ENCODE measurements at regions of chr2 and their contacts with region 1.

Region 1: DNA sequence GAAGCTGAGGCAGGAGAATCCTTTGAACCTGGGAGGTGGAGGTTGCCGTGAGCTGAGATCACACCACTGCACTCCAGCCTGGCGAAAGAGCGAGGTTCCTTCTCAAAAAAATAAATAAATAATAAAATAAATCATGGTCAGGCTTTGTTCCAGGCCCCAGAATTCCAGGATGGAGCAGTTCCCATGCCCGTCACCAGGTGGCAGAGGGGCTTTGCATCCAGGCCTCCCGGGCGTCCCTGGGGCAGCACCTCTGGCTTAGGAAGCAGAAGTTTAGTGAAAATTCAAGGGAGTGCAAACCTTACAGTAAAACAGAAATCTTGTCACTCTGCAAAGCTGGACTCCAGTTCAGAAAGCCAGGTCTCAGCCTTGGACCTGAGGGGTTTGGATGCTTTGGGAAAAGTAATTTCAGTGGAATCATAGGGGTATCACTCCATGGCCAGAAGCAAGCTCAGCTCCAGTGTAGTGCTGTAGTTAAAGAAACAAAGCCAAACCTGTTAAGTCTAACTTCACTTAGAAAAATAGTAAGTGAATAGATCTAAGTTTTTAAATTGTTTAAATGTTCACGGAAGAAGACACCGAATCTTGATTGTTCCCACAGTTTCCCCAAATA is 512.7 kb downstream of the CMPK2 start:
- DNase-seq: peak; percentile 77
- H3K4me3 Mint-ChIP-seq: no peak overlapping the region
- H3K27ac Mint-ChIP-seq: no peak overlapping the region
- H3K4me1 Mint-ChIP-seq: no peaks in the 10 kb centered on the region
- H3K27me3 Mint-ChIP-seq: no peaks in the 10 kb centered on the region
- CTCF ChIP-seq: peak; percentile 51

Region 2: GRCh38 chr2:6773007-6773693 is 420.1 kb after region 1 on chr2:
- CTCF ChIA-PET with region 1: no interaction called
- intact Hi-C with region 1: loop called (anchors 2 kb)
- DNase-seq: peak; percentile 86
- H3K4me3 Mint-ChIP-seq: peak overlapping the region; percentile 39
- H3K27ac Mint-ChIP-seq: no peak overlapping the region
- H3K4me1 Mint-ChIP-seq: no peaks in the 10 kb centered on the region
- H3K27me3 Mint-ChIP-seq: peaks cover 42% of the 10 kb centered on the region
- CTCF ChIP-seq: peak; percentile 94

Measured in Calu3 (cell line).